ENCODE measurements at regions of chr11 and their contacts with region 1.

Region 1: GRCh38 chr11:72471005-72471898 is 36.9 kb upstream of the CLPB start:
- DNase-seq: peak; percentile 66 to 72
- ATAC-seq: peak; percentile 95 to 98
- H3K4me3 ChIP-seq: no peak overlapping the region
- H3K27ac ChIP-seq: no peak overlapping the region
- H3K4me1 ChIP-seq: no peaks in the 10 kb centered on the region
- CTCF ChIP-seq: peak; percentile 83
- EP300 ChIP-seq: no peak
- POLR2A ChIP-seq: no peak
- RAD21 ChIP-seq: peak; percentile 76 to 80

Region 2: GRCh38 chr11:72209101-72209500 is 262.2 kb before region 1 on chr11:
- CTCF ChIA-PET with region 1: no interaction called
- POLR2A ChIA-PET with region 1: no interaction called
- DNase-seq: no peak
- ATAC-seq: no peak
- H3K4me3 ChIP-seq: no peak overlapping the region
- H3K27ac ChIP-seq: no peak overlapping the region
- H3K4me1 ChIP-seq: no peaks in the 10 kb centered on the region
- CTCF ChIP-seq: no peak
- EP300 ChIP-seq: no peak
- POLR2A ChIP-seq: no peak
- RAD21 ChIP-seq: no peak

Region 3: GRCh38 chr11:72446902-72447769 is 24.1 kb before region 1 on chr11:
- CTCF ChIA-PET with region 1: interaction called, 25 read pairs
- POLR2A ChIA-PET with region 1: no interaction called
- DNase-seq: peak; percentile 76 to 83
- ATAC-seq: peak; percentile 85 to 89
- H3K4me3 ChIP-seq: no peak overlapping the region
- H3K27ac ChIP-seq: no peak overlapping the region
- H3K4me1 ChIP-seq: no peaks in the 10 kb centered on the region
- CTCF ChIP-seq: peak; percentile 82
- EP300 ChIP-seq: no peak
- POLR2A ChIP-seq: no peak
- RAD21 ChIP-seq: peak; percentile 59 to 65

Region 4: GRCh38 chr11:72460091-72460647 is 11.1 kb before region 1 on chr11:
- CTCF ChIA-PET with region 1: interaction called, 44 read pairs
- POLR2A ChIA-PET with region 1: no interaction called
- DNase-seq: no peak
- ATAC-seq: peak in 1 of 2 experiments; percentile 42; a peak in 2 of 6 replicates
- H3K4me3 ChIP-seq: no peak overlapping the region
- H3K27ac ChIP-seq: no peak overlapping the region
- H3K4me1 ChIP-seq: no peaks in the 10 kb centered on the region
- CTCF ChIP-seq: no peak
- EP300 ChIP-seq: no peak
- POLR2A ChIP-seq: no peak
- RAD21 ChIP-seq: no peak

Region 5: GRCh38 chr11:72561856-72562255 is 90.6 kb after region 1 on chr11:
- CTCF ChIA-PET with region 1: interaction called, 17 read pairs
- POLR2A ChIA-PET with region 1: no interaction called
- DNase-seq: no peak
- ATAC-seq: peak in 1 of 2 experiments; percentile 22; a peak in 2 of 6 replicates
- H3K4me3 ChIP-seq: no peak overlapping the region
- H3K27ac ChIP-seq: no peak overlapping the region
- H3K4me1 ChIP-seq: no peaks in the 10 kb centered on the region
- CTCF ChIP-seq: no peak
- EP300 ChIP-seq: no peak
- POLR2A ChIP-seq: no peak
- RAD21 ChIP-seq: no peak

Region 6: DNA sequence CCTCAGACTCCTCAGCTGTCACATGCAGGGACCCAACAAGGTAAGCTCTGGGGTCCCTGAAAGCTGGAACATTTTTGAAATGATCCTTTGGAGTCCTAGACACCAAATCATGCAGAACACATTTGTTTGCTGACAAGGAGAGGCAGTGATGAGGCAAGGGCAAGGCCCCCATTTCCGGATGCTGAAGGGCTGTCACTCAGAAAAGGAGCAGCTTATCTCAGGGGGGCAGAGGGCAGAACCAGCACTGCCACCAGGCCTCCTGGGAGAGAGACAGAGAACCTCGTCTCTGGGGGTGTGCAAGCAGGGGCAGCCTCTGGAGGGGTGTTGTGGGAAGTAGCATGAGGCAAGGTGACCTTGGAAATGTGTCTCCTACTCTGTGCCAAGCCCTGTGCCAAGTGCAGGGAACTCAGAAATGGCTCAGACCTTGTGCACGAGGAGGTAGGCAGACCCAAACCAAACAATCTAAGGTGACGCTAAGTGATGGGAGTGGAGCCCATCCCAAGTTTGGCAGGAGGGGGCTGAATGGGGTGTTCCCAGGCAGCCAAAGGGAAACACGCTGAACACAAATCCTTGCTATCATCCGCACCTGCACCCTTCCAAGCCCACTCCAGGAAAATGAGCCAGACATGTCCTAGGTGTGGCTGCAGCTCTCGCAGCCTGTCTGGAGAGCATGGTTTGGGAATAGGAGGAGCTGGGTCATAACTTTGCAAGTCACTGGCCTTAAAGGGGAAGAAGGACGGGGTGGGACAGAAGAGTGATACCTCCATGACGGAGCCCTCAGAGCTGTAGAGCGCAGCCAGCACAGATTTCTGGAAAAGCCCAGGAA is 108.8 kb after region 1 on chr11:
- CTCF ChIA-PET with region 1: interaction called, 16 read pairs
- POLR2A ChIA-PET with region 1: no interaction called
- DNase-seq: no peak
- ATAC-seq: peak; percentile 14 to 17; a peak in 2 of 6 replicates
- H3K4me3 ChIP-seq: no peak overlapping the region
- H3K27ac ChIP-seq: no peak overlapping the region
- H3K4me1 ChIP-seq: no peaks in the 10 kb centered on the region
- CTCF ChIP-seq: no peak
- EP300 ChIP-seq: no peak
- POLR2A ChIP-seq: no peak
- RAD21 ChIP-seq: no peak

Region 7: DNA sequence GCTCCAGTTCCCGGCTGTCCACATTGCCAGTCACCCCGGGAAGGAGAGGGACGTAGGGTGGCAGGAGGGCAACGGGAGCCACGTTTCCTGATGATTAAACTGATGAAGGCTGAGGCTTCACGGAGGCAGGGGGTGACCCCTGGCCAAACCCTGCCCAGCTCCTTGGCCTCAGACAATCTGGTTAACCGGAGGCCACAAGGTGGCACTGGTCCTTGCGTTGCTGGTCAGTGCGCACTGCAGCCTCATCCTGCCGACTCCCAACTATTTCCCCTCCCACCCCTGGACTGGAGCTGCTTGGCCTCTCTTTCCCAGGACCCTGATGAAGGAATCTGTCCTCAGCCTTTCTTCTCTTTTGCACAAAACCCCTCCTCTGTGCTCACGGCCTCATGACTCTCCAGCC is 127.7 kb after region 1 on chr11:
- CTCF ChIA-PET with region 1: interaction called, 10 read pairs
- POLR2A ChIA-PET with region 1: no interaction called
- DNase-seq: peak; percentile 59 to 65
- ATAC-seq: peak; percentile 75 to 91
- H3K4me3 ChIP-seq: no peak overlapping the region
- H3K27ac ChIP-seq: no peak overlapping the region
- H3K4me1 ChIP-seq: peaks cover 13% of the 10 kb centered on the region
- CTCF ChIP-seq: peak; percentile 58
- EP300 ChIP-seq: no peak
- POLR2A ChIP-seq: no peak
- RAD21 ChIP-seq: peak; percentile 54 to 59; a peak in 4 of 5 replicates

Region 8: DNA sequence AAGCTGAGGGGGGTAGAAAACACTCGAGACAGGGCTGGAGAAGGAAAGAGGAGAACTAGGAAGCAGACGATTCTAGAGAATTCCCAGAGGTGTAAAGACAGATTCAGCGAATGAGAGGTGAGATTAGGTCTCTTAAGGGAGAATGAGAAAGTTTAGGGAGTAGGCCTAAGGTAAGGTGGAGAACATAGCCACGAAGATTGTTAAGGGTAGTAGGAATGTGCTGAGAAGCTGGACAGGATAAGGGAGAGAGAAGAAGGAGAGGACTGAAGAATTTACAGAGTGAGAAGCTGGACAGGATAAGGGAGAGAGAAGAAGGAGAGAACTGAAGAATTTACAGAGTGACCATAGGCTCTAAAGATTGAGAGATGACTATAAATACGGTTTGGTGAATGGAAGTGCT is 1700.7 kb after region 1 on chr11:
- CTCF ChIA-PET with region 1: no interaction called
- POLR2A ChIA-PET with region 1: no interaction called
- DNase-seq: no peak
- ATAC-seq: no peak
- H3K4me3 ChIP-seq: peak overlapping the region; percentile 86
- H3K27ac ChIP-seq: peak overlapping the region; percentile 89 to 90
- H3K4me1 ChIP-seq: peaks cover 46% of the 10 kb centered on the region
- CTCF ChIP-seq: no peak
- EP300 ChIP-seq: no peak
- POLR2A ChIP-seq: no peak
- RAD21 ChIP-seq: no peak

Measured in A549 (cell line).